Activated CD8-positive, alpha-beta T cell treated with anti-CD3 and anti-CD28 coated beads for 36 hours (primary cell): ENCODE measurements at regions of chr6 and their contacts with region 1.

Region 1: GRCh38 chr6:43013843-43014433 is at the starts of genes KLHDC3 and MEA1:
- DNase-seq: peak; percentile 100
- ATAC-seq: peak; percentile 98
- H3K4me3 Mint-ChIP-seq: peak within 1 kb of the TSS; percentile 96
- H3K27ac Mint-ChIP-seq: peak within 1 kb of the TSS; percentile 93
- H3K4me1 Mint-ChIP-seq: peaks cover 52% of the 10 kb centered on the region
- H3K27me3 Mint-ChIP-seq: no peaks in the 10 kb centered on the region
- CTCF ChIP-seq: no peak
- total RNA-seq, gene KLHDC3: 58.6 to 64.0 TPM
- total RNA-seq, gene MEA1: 84.8 to 92.3 TPM

Region 2: GRCh38 chr6:42845327-42845694 is 168.6 kb before region 1 on chr6:
- CTCF ChIA-PET with region 1: no interaction called
- POLR2A ChIA-PET with region 1: no interaction called
- intact Hi-C with region 1: no loop called
- DNase-seq: no peak
- ATAC-seq: no peak
- H3K4me3 Mint-ChIP-seq: no peak overlapping the region
- H3K27ac Mint-ChIP-seq: no peak overlapping the region
- H3K4me1 Mint-ChIP-seq: peaks cover 14% of the 10 kb centered on the region
- H3K27me3 Mint-ChIP-seq: no peaks in the 10 kb centered on the region
- CTCF ChIP-seq: no peak

Region 3: DNA sequence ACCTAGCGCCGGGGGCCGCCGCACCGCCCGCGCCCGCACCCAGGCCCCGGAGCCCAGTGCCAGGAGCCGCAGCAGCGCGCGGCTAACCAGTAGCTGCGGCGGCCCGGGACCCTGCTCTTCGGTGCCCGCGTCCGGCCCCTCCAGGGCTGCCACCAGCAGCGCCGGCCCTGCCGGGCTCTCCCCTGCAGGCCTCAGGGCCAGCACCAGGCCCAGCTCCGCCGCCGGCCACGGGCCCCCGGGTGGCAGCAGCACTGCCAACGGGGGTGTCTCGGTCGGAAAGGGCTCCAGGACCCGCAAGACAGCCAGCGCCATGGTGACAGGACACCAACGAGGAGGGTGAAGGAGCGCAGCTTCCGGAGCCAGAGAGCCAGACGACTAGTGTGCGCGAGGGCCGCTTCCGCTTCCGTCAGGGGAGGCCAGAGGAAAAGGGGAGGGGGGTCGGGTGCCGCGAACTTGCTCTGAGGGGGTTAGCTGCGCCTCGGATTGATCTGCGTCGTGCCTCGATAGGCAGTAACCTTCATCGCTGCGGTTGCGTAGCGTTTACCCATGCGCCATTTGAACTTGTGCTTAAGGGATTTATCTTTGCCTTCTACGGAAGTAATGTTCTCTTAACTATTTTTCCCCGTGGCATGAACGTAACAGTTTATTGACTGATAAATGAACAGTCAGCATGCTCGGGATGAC is 35.0 kb before region 1 on chr6 and contains the start of gene PEX6:
- CTCF ChIA-PET with region 1: interaction called, 3 read pairs
- POLR2A ChIA-PET with region 1: interaction called, 9 read pairs
- intact Hi-C with region 1: loop called (anchors 5 kb)
- DNase-seq: peak; percentile 94
- ATAC-seq: peak; percentile 92
- H3K4me3 Mint-ChIP-seq: peak within 1 kb of the TSS; percentile 88
- H3K27ac Mint-ChIP-seq: peak within 1 kb of the TSS; percentile 95
- H3K4me1 Mint-ChIP-seq: peaks cover 45% of the 10 kb centered on the region
- H3K27me3 Mint-ChIP-seq: no peaks in the 10 kb centered on the region
- CTCF ChIP-seq: no peak
- total RNA-seq, gene PEX6: 7.3 to 9.0 TPM

Region 4: GRCh38 chr6:42996513-42996912 is 17.4 kb before region 1 on chr6:
- CTCF ChIA-PET with region 1: interaction called, 4 read pairs
- POLR2A ChIA-PET with region 1: interaction called, 11 read pairs
- intact Hi-C with region 1: no loop called
- DNase-seq: no peak
- ATAC-seq: no peak
- H3K4me3 Mint-ChIP-seq: no peak overlapping the region
- H3K27ac Mint-ChIP-seq: no peak overlapping the region
- H3K4me1 Mint-ChIP-seq: no peaks in the 10 kb centered on the region
- H3K27me3 Mint-ChIP-seq: no peaks in the 10 kb centered on the region
- CTCF ChIP-seq: no peak

Region 5: DNA sequence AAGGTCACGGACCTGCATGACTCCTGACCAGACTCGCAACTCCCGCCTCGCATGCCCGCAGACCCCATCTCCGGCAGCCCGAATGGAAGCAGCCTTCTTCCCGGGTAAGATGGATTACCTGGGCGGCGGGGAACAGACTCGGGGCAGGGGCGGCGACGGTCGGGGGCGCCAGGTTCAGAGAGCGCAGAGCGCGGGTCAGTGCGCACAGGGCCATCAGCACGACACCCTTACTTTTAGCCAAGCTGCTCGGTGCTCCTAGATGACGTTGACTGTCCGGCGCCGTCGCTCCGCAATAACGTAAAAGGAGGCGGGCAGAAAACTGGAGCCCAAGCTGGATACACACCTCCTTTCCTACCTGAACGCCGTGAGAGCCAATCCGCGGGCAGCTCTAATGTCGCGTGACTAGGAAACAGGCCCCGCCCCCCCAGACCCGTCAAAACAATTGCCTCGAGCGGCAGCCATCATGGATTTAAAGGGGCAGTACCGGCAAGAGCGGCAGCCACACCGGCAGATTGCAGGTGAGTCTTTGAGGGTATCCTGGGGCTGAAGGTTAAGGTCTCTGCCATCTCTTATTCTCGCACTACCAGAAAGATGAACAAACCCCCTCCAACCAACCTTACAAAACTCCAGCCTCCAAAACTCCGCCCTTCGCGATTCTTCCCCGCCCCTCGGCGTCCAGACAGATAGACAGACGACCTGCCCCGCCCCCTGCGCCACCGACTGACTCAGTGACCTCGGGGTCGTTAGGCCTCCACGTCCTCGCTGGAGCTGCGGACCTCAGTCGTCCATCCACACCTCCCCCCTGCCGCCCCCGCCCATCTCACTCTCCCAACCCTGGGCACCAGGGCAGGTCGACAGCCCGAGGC is 45.5 kb after region 1 on chr6 and contains the starts of genes KLC4 and MRPL2:
- CTCF ChIA-PET with region 1: no interaction called
- POLR2A ChIA-PET with region 1: interaction called, 6 read pairs
- intact Hi-C with region 1: loop called (anchors 5 kb)
- DNase-seq: peak; percentile 99
- ATAC-seq: peak; percentile 98
- H3K4me3 Mint-ChIP-seq: peak within 1 kb of the TSS; percentile 81
- H3K27ac Mint-ChIP-seq: peak within 1 kb of the TSS; percentile 92
- H3K4me1 Mint-ChIP-seq: peaks cover 37% of the 10 kb centered on the region
- H3K27me3 Mint-ChIP-seq: no peaks in the 10 kb centered on the region
- CTCF ChIP-seq: no peak
- total RNA-seq, gene KLC4: 10.6 to 11.5 TPM
- total RNA-seq, gene MRPL2: 108 TPM